Activated B cell treated with CpG ODN at 0.5 μM for 24 hours (primary cell): ENCODE measurements at regions of chr10 and their contacts with region 1.

Region 1: GRCh38 chr10:96229568-96230030 is 41.8 kb downstream of the BLNK start:
- DNase-seq: peak; percentile 71
- ATAC-seq: peak; percentile 63
- H3K4me3 Mint-ChIP-seq: peak overlapping the region; percentile 36
- H3K27ac Mint-ChIP-seq: peak overlapping the region; percentile 76
- H3K4me1 Mint-ChIP-seq: peaks cover 50% of the 10 kb centered on the region
- H3K27me3 Mint-ChIP-seq: no peaks in the 10 kb centered on the region
- CTCF ChIP-seq: no peak

Region 2: DNA sequence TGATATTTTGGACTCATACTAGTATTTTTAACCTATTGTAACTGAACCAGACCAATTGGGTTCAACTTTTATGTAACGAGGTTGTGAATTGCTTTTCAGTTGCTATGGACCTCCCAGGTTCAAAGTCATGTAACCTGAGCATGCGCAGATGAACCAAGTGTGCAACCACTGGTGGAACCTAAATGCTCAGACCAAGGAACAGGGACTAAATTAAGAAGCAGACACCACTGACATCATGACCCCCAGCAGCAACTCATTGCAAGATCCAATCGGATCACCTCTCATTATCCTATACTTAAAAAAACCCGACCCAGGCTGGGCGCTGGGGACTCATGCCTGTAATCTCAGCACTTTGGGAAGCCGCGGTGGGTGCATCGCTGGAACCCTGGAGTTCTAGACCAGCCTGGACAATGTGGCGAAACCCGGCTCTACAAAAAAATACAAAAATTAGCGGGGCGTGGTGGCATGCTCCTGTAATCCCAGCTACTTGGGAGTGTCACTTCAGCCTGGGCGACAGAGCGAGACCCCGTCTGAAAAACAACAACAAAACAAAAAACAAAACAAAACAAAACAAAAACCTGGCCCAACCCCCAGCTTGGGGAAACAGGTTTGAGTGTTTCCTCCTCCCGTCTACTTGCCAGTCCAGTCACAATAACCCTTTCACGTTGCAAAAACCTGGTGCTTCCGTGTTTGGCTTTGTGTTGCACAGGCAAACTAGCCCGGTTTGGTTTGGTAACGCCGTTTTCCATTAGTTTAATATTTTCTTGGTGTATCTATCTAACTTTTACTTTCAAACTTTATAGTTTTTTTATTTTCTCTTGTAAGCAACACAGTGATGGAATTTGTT is 110.8 kb before region 1 on chr10:
- CTCF ChIA-PET with region 1: no interaction called
- POLR2A ChIA-PET with region 1: no interaction called
- intact Hi-C with region 1: no loop called
- DNase-seq: no peak
- ATAC-seq: no peak
- H3K4me3 Mint-ChIP-seq: no peak overlapping the region
- H3K27ac Mint-ChIP-seq: no peak overlapping the region
- H3K4me1 Mint-ChIP-seq: no peaks in the 10 kb centered on the region
- H3K27me3 Mint-ChIP-seq: peaks cover 58% of the 10 kb centered on the region
- CTCF ChIP-seq: no peak

Region 3: DNA sequence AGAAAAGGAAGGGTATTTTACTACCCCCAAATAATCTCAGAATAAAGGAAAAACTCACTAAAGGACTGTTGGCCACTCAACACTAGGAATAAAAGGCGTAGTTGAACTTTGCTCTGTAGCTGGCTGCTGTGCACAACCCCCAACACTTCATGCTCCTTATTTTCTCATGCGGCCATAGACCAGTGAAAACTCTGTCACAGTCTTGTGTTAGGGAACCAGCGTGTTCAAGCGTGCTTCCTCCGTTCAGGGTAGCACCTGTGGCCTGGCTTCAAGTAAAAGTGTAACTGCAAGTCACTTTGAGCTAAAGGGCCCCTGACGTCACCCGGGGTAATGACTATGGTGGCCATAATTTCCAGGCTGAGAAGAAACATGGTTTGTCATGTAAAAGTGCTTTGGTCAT is 14.8 kb after region 1 on chr10:
- CTCF ChIA-PET with region 1: interaction called, 29 read pairs
- POLR2A ChIA-PET with region 1: interaction called, 33 read pairs
- intact Hi-C with region 1: loop called (anchors 1 kb)
- DNase-seq: peak; percentile 61
- ATAC-seq: peak; percentile 96
- H3K4me3 Mint-ChIP-seq: peak overlapping the region; percentile 67
- H3K27ac Mint-ChIP-seq: peak overlapping the region; percentile 91
- H3K4me1 Mint-ChIP-seq: peaks cover 80% of the 10 kb centered on the region
- H3K27me3 Mint-ChIP-seq: no peaks in the 10 kb centered on the region
- CTCF ChIP-seq: no peak

Region 4: GRCh38 chr10:96257944-96258343 is 28.3 kb after region 1 on chr10:
- CTCF ChIA-PET with region 1: interaction called, 32 read pairs
- POLR2A ChIA-PET with region 1: interaction called, 14 read pairs
- intact Hi-C with region 1: no loop called
- DNase-seq: no peak
- ATAC-seq: peak; percentile 16
- H3K4me3 Mint-ChIP-seq: peak overlapping the region; percentile 48
- H3K27ac Mint-ChIP-seq: peak overlapping the region; percentile 83
- H3K4me1 Mint-ChIP-seq: peaks cover 90% of the 10 kb centered on the region
- H3K27me3 Mint-ChIP-seq: no peaks in the 10 kb centered on the region
- CTCF ChIP-seq: no peak

Region 5: GRCh38 chr10:96271016-96271829 is 41.6 kb after region 1 on chr10 and contains the start of gene BLNK:
- CTCF ChIA-PET with region 1: interaction called, 90 read pairs
- POLR2A ChIA-PET with region 1: interaction called, 94 read pairs
- intact Hi-C with region 1: loop called (anchors 1 kb)
- DNase-seq: peak; percentile 40
- ATAC-seq: peak; percentile 56
- H3K4me3 Mint-ChIP-seq: peak within 1 kb of the TSS; percentile 91
- H3K27ac Mint-ChIP-seq: peak within 1 kb of the TSS; percentile 98
- H3K4me1 Mint-ChIP-seq: peaks cover 81% of the 10 kb centered on the region
- H3K27me3 Mint-ChIP-seq: no peaks in the 10 kb centered on the region
- CTCF ChIP-seq: no peak
- total RNA-seq, gene BLNK: 238 and 267 TPM in 2 replicates

Region 6: DNA sequence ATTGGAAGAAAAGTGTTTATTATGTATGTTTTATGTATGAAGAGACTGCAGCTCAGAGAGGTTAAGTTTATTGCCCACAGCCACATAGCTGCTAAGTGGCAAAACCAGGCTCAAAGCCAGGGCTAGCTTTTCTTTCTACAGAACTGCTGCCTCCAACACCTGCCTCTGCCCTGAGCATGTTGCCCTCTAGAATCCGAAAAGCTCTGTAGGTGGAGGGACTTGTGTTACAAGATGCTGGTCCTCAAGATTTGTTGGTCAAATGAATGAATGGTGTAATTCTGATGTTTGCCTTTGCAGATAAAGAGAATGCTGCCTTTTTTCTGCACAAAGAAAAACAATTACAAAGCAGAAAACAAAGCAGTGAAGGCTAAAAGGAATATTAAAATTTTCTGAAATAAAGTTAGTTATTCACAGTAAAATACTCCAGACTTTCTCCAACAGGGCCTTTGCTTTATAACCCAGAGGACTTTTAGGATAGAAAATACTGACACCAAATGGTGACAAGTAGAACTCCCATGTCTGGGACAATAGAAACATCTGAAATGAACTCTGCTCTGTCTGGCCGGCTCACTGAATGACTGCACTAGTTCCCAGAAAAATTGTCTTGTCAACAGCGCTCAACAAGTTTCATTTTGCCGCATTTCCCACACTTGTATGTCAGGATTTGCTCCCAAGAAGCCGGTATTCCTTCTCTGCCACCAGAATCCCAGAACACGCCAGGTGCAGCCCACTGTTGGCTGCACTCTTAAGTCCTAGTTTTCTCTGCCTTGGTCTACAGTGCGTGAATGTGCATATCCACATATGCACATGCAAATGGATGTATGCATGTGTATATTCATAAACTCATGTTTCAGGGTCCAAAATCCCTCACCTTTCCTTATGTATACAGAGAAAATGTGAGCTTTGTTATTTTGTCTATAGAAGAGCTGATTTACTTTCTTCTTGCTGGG is 63.6 kb after region 1 on chr10:
- CTCF ChIA-PET with region 1: interaction called, 612 read pairs
- POLR2A ChIA-PET with region 1: interaction called, 169 read pairs
- intact Hi-C with region 1: loop called (anchors 1 kb)
- DNase-seq: no peak
- ATAC-seq: peak; percentile 67
- H3K4me3 Mint-ChIP-seq: no peak overlapping the region
- H3K27ac Mint-ChIP-seq: peak overlapping the region; percentile 68
- H3K4me1 Mint-ChIP-seq: peaks cover 59% of the 10 kb centered on the region
- H3K27me3 Mint-ChIP-seq: no peaks in the 10 kb centered on the region
- CTCF ChIP-seq: peak; percentile 62

Region 7: GRCh38 chr10:96319754-96320474 is 90.3 kb after region 1 on chr10:
- CTCF ChIA-PET with region 1: interaction called, 14 read pairs
- POLR2A ChIA-PET with region 1: interaction called, 7 read pairs
- intact Hi-C with region 1: no loop called
- DNase-seq: no peak
- ATAC-seq: no peak
- H3K4me3 Mint-ChIP-seq: no peak overlapping the region
- H3K27ac Mint-ChIP-seq: no peak overlapping the region
- H3K4me1 Mint-ChIP-seq: no peaks in the 10 kb centered on the region
- H3K27me3 Mint-ChIP-seq: peaks cover 14% of the 10 kb centered on the region
- CTCF ChIP-seq: no peak

Region 8: GRCh38 chr10:96339957-96340904 is 110.6 kb after region 1 on chr10:
- CTCF ChIA-PET with region 1: interaction called, 22 read pairs
- POLR2A ChIA-PET with region 1: interaction called, 3 read pairs
- intact Hi-C with region 1: loop called (anchors 1 kb)
- DNase-seq: peak; percentile 22
- ATAC-seq: peak; percentile 78
- H3K4me3 Mint-ChIP-seq: no peak overlapping the region
- H3K27ac Mint-ChIP-seq: no peak overlapping the region
- H3K4me1 Mint-ChIP-seq: peaks cover 6% of the 10 kb centered on the region
- H3K27me3 Mint-ChIP-seq: no peaks in the 10 kb centered on the region
- CTCF ChIP-seq: no peak